ENCODE measurements at regions of chr5 and their contacts with region 1.

Region 1: DNA sequence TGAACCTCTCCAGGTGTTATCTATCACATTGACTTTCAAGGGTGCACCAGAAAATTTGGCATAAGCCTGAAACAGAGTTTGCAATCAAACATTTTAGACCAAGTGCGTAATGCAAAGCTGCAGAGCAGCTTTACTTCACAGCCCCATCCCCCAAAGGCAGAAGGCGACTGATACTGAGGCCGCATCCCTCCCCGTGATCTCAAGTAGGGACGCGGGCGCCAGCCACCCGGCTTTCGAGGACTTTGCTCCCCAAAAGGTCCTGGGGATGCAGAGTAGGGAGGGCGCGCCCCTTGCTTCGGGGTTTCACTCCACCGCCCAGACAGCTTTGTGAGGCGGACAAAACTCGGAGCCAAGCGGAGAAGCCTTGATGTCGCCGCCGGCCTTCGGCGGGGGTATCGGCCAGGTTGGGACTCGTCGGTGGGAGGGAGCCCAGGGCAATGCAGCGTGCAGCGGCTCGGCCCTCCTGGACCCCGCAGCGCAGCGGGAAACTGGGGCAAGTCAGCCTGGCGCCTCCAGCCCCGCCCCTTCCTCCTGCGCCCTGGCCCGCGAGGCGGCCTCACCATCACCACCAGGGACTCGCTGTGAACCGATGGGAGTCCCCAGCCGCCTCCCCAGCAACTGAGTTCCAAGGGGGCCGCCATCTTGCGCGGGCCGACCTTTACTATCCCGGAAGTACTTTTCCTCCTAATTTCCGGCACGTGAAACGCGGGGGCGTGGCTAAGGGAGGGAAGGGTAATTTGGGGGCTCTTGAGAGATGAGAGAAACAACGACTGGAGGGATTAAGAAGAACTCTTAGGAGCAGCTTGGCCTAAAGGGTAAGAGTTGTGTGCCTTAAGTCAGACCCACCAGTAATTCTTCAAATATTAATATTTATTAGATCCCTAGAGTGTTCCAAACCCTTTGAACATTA is at the start of gene MTX3:
- DNase-seq: peak; percentile 92
- ATAC-seq: peak; percentile 88
- H3K4me3 Mint-ChIP-seq: peak within 1 kb of the TSS; percentile 91
- H3K27ac Mint-ChIP-seq: peak within 1 kb of the TSS; percentile 94
- H3K4me1 Mint-ChIP-seq: peaks cover 48% of the 10 kb centered on the region
- H3K27me3 Mint-ChIP-seq: no peaks in the 10 kb centered on the region
- total RNA-seq, gene MTX3: 11.7 to 13.2 TPM

Region 2: GRCh38 chr5:79962575-79963222 is 28.2 kb before region 1 on chr5:
- CTCF ChIA-PET with region 1: interaction called, 3 read pairs
- POLR2A ChIA-PET with region 1: interaction called, 12 read pairs
- DNase-seq: no peak
- ATAC-seq: no peak
- H3K4me3 Mint-ChIP-seq: no peak overlapping the region
- H3K27ac Mint-ChIP-seq: no peak overlapping the region
- H3K4me1 Mint-ChIP-seq: peaks cover 2% of the 10 kb centered on the region
- H3K27me3 Mint-ChIP-seq: peaks cover 7% of the 10 kb centered on the region

Region 3: GRCh38 chr5:79974891-79975290 is 16.0 kb before region 1 on chr5:
- CTCF ChIA-PET with region 1: interaction called, 10 read pairs
- POLR2A ChIA-PET with region 1: interaction called, 35 read pairs
- DNase-seq: no peak
- ATAC-seq: no peak
- H3K4me3 Mint-ChIP-seq: no peak overlapping the region
- H3K27ac Mint-ChIP-seq: no peak overlapping the region
- H3K4me1 Mint-ChIP-seq: peaks cover 7% of the 10 kb centered on the region
- H3K27me3 Mint-ChIP-seq: peaks cover 3% of the 10 kb centered on the region

Measured in activated CD8-positive, alpha-beta T cell treated with anti-CD3 and anti-CD28 coated beads, Interleukin-2, amount 10 ng/mL, durations not matched to agents 7 days and 5 days (primary cell).